GM18951 (cell line): ENCODE measurements at regions of chr2 and their contacts with region 1.

Region 1: GRCh38 chr2:9813312-9814133 is 29.8 kb upstream of the TAF1B start:
- POLR2A ChIP-seq: no peak

Region 2: DNA sequence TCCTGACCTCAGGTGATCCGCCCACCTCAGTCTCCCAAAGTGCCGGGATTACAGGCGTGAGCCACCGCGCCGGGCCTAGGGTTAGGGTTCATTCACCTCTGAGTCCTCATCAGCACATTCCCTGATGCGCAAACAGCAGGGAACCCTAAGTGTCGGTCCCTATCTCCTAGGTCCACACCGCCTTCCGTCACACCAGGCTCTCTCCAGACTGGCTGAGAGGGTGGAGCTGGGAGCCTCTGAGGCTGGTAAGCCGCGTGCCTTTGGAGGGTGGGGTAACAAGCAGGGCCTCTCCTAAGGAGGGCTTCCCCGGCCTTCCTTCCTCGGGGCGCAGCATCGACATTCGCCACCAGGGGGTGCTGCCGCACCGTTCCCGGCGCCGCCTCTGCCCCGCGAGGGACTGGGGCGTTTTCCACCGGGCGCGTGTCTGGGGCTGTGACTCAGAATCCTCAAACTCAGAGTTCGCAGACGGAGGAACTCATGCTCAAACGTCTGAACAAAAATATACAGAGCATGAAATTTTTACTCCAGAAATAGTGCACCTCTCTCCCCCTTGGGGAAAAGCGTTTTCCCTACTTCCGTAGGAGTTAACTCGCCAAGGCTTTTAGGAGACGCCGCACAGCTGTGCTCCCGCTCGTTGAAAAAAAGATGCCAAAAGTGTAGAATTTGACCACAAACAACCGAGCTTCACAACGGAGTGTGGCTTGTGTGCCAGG is 670.8 kb before region 1 on chr2:
- in situ Hi-C with region 1: no loop called
- POLR2A ChIP-seq: no peak

Region 3: GRCh38 chr2:10057231-10058107 is 243.9 kb after region 1 on chr2:
- in situ Hi-C with region 1: loop called (anchors 10 kb)
- POLR2A ChIP-seq: no peak

Region 4: DNA sequence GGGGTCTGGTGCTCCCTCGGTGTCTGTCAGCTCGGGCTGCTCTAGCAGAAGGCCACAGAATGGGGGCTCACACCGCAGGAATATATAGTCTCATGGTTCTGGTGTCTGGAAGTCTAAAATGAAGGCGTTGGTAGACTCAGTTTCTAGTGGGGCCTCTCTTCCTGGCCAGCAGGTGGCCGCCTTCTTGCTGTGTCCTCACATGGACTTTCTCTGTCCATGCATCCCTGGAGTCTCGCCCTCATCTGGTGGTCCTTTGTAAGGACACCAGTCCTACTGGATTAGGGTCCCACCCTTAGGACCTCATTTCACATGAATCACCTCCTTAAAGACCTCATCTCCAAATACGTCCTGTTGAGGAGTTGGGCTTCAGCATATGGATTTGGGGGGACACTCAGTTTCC is 374.7 kb after region 1 on chr2:
- in situ Hi-C with region 1: no loop called
- POLR2A ChIP-seq: no peak